IMR-90 (cell line): ENCODE measurements at regions of chr15 and their contacts with region 1.

Region 1: DNA sequence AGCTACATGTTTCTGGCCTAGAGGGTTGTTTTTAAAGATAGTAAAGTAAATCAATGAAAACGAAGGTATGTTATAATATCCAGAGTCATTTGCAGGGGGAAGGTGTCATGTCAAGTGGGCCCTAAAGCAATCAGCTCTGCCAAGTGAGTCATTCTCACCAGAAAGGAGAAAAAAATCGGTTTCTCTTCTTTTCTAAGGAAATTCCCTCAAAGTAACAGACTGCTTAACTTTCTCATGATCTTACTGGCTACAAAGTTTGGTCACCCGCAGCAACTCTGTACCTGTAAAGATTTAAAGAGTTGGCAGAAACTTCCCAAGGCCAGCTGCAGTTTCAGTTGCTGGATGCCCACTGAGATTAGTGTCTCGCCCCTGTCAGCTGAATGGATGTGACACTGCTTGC is 5.5 kb upstream of the FSIP1 start:
- DNase-seq: peak; percentile 52
- ATAC-seq: no peak
- H3K4me3 ChIP-seq: no peak overlapping the region
- H3K27ac ChIP-seq: peak overlapping the region; percentile 85
- H3K4me1 ChIP-seq: peaks cover 27% of the 10 kb centered on the region
- H3K27me3 ChIP-seq: no peaks in the 10 kb centered on the region
- CTCF ChIP-seq: no peak
- POLR2A ChIP-seq: no peak
- RAD21 ChIP-seq: no peak

Region 2: GRCh38 chr15:39553947-39554693 is 234.0 kb before region 1 on chr15:
- CTCF ChIA-PET with region 1: no interaction called
- POLR2A ChIA-PET with region 1: no interaction called
- dilution Hi-C with region 1: no loop called
- in situ Hi-C with region 1: no loop called
- intact Hi-C with region 1: no loop called
- DNase-seq: no peak
- ATAC-seq: no peak
- H3K4me3 ChIP-seq: no peak overlapping the region
- H3K27ac ChIP-seq: peak overlapping the region; percentile 98; the same call in 1 of the 2 replicates
- H3K4me1 ChIP-seq: peaks cover 26% of the 10 kb centered on the region
- H3K27me3 ChIP-seq: no peaks in the 10 kb centered on the region
- CTCF ChIP-seq: no peak
- POLR2A ChIP-seq: no peak
- RAD21 ChIP-seq: no peak

Region 3: DNA sequence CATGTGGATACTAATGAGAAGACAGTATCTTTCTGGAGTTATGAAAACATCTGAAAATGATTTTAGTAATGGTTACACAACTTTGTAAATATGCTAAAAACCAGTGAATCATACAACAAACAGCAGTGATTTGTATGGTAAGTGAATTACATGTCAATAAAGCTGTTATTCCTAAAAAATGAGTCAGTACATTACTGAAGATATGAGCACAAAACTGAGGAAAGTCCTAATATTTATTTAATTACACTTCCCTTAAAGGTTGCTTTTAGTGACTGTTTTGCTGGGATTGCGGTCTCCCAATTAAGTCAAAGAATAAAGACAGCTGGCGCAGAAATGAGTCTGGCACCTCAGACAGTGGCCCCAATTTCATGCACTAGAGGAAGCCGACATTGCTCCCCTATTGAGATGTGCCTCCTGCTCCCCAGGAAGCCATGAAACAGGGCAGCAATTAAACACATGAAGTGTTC is 45.4 kb after region 1 on chr15:
- CTCF ChIA-PET with region 1: no interaction called
- POLR2A ChIA-PET with region 1: no interaction called
- dilution Hi-C with region 1: no loop called
- in situ Hi-C with region 1: no loop called
- intact Hi-C with region 1: loop called (anchors 5 kb)
- DNase-seq: peak; percentile 78
- ATAC-seq: peak; percentile 68
- H3K4me3 ChIP-seq: no peak overlapping the region
- H3K27ac ChIP-seq: peak overlapping the region; percentile 30; the same call in 1 of the 2 replicates
- H3K4me1 ChIP-seq: peaks cover 17% of the 10 kb centered on the region
- H3K27me3 ChIP-seq: no peaks in the 10 kb centered on the region
- CTCF ChIP-seq: no peak
- POLR2A ChIP-seq: no peak
- RAD21 ChIP-seq: no peak

Region 4: DNA sequence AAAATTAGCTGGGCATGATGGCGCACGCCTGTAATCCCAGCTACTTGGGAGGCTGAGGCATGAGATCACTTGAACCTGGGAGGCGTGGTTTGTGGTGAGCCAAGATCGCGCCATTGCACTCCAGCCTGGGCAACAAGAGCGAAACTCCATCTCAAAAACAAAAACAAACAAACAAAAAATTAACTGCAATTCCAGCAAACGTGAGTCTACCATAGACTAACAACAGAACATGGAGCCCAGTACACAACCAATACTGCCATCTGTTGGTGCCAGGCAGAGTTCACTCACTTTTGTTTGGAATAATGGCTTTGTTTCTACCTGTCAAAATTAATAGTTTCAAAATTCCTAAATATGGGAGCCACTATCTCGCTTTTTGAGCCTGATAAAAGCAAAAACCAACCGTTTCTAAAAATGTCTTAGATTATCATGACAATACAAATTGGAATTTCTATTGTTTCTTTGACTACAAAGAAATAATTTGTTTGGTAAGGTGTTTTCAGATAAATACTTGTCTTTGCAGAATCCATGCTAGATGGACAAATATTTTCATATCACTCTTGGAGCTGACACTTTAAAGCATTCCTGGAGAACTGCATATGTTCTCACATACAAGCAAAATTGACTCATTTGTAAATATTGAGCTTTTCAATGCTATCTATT is 86.9 kb after region 1 on chr15:
- CTCF ChIA-PET with region 1: interaction called, 9 read pairs
- POLR2A ChIA-PET with region 1: no interaction called
- dilution Hi-C with region 1: no loop called
- in situ Hi-C with region 1: no loop called
- intact Hi-C with region 1: loop called (anchors 1 kb)
- DNase-seq: no peak
- ATAC-seq: no peak
- H3K4me3 ChIP-seq: no peak overlapping the region
- H3K27ac ChIP-seq: no peak overlapping the region
- H3K4me1 ChIP-seq: peaks cover 16% of the 10 kb centered on the region
- H3K27me3 ChIP-seq: no peaks in the 10 kb centered on the region
- CTCF ChIP-seq: peak; percentile 51
- POLR2A ChIP-seq: no peak
- RAD21 ChIP-seq: peak; percentile 52

Region 5: GRCh38 chr15:39919748-39920509 is 131.8 kb after region 1 on chr15 and contains the start of gene GPR176:
- CTCF ChIA-PET with region 1: no interaction called
- POLR2A ChIA-PET with region 1: no interaction called
- dilution Hi-C with region 1: no loop called
- in situ Hi-C with region 1: no loop called
- intact Hi-C with region 1: loop called (anchors 2 kb)
- DNase-seq: peak; percentile 84
- ATAC-seq: peak; percentile 84
- H3K4me3 ChIP-seq: peak within 1 kb of the TSS; percentile 76
- H3K27ac ChIP-seq: peak within 1 kb of the TSS; percentile 89
- H3K4me1 ChIP-seq: peaks cover 4% of the 10 kb centered on the region
- H3K27me3 ChIP-seq: no peaks in the 10 kb centered on the region
- CTCF ChIP-seq: no peak; the same call in 1 of the 2 replicates
- POLR2A ChIP-seq: peak; percentile 89
- RAD21 ChIP-seq: no peak; the same call in 1 of the 2 replicates
- total RNA-seq, gene GPR176: 194 and 246 TPM in 2 replicates

Region 6: DNA sequence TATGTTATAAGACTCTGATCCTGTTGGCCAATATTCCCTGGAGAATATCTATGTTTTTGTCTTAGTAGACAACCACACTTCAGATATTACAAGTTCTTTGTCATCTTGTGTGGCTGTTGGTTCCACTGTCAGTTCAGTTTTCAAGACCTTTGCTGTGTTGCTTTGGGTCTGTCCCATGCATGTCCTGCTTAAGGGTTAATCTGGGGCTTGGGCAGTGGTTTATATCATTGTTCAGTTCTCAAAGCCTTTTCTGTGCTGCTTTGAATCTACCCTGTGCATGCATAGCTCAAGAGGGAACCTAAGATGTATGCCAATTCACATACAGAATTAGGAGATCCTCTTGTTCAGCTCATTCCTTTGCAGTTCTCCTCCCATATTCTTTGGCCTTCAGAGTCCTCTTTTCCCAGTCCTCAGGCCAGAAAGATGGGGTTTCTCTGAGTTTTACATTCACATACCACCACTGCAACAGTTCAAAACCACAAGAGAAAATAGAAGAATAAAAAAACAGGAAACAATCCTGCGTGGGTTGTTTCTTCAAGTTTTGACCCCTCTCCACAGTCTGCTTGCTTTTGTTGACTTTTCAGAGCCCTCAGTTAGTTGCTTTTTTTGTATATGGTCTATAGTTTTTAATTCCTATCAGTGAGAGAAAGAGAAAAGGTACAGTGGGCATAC is 394.4 kb after region 1 on chr15:
- CTCF ChIA-PET with region 1: no interaction called
- POLR2A ChIA-PET with region 1: no interaction called
- dilution Hi-C with region 1: no loop called
- in situ Hi-C with region 1: no loop called
- intact Hi-C with region 1: no loop called
- DNase-seq: no peak
- ATAC-seq: no peak
- H3K4me3 ChIP-seq: no peak overlapping the region
- H3K27ac ChIP-seq: no peak overlapping the region
- H3K4me1 ChIP-seq: no peaks in the 10 kb centered on the region
- H3K27me3 ChIP-seq: no peaks in the 10 kb centered on the region
- CTCF ChIP-seq: no peak
- POLR2A ChIP-seq: no peak
- RAD21 ChIP-seq: no peak